HEK293 (cell line): ENCODE measurements at regions of chr22 and their contacts with region 1.

Region 1: DNA sequence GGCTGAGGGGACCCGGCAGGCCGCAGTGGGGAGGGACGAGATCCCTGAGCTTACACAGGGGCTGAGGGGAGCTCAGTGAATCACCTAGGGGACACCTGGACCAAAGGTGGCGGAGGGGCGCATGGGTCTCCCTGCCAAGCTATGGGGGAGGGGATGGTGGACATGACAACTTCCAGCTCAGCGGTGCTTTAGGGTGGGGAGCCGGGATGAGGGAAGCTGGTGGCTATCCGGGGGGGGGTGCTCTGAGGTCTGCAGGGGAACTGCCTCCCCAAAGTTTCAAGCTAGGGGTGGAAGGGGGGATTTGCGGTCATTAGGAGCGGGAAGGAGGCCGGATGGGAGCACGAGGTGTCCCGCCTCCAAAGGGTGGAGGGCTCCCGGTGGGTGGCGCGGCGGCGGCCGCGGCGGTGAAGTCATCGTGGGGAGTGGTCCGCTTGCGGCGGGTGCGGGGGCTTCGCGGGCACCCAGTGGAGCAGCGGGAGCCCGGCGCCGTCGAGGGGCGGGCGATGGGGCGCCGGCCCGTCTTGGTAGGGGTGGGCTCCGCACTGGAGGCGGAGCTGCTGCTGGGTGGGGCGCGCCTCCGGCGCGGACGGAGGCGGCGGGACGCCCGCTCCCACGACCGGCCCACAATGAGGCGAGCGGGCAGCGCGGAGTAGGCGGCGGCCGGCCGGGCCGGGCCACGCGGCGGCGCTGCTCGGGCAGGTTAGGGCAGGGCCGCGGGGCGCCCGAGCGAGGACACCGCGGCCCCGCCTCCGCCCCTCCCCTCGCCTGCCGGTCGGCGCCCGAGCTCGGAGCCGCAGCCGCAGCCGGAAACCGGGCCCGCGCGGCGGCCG is at the start of gene MICALL1:
- H3K4me3 ChIP-seq: peak within 1 kb of the TSS; percentile 72
- H3K27ac ChIP-seq: peak within 1 kb of the TSS; percentile 98
- H3K4me1 ChIP-seq: peaks cover 10% of the 10 kb centered on the region; the same call in 1 of the 2 replicates
- CTCF ChIP-seq: peak; percentile 28; the same call in 1 of the 2 replicates

Region 2: DNA sequence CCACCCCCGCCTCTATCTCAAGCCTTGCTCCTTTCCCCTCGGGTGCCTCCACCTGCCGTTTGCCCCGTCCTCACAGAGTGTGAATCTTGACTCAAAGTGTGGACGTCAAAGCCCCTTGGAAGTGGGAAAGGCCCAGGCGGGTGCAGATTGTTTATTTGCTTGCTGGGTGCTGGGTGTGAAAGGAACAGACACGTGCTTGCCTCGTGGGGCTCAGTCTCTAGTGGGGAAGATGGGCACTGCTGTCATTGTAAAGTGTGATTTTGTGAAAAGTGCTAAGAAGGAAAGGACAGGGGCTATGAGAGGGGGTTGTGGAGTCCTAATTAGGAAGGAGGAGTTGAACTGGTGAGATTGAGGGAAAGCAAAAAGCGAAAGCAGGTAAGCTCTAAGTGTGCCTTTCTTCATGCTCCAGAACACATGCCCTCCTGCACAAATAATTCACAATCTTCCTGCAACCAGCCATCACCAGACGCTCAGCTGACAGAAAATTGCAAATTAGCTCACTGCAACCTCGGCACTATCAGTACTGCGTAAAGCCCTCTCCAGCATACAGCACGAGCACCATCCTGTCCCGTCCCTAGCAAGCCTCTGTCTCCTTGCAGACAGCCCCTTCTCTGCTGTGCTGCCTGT is 107.8 kb before region 1 on chr22:
- CTCF ChIA-PET with region 1: no interaction called
- POLR2A ChIA-PET with region 1: no interaction called
- H3K4me3 ChIP-seq: no peak overlapping the region
- H3K27ac ChIP-seq: no peak overlapping the region
- H3K4me1 ChIP-seq: no peaks in the 10 kb centered on the region
- CTCF ChIP-seq: no peak

Region 3: DNA sequence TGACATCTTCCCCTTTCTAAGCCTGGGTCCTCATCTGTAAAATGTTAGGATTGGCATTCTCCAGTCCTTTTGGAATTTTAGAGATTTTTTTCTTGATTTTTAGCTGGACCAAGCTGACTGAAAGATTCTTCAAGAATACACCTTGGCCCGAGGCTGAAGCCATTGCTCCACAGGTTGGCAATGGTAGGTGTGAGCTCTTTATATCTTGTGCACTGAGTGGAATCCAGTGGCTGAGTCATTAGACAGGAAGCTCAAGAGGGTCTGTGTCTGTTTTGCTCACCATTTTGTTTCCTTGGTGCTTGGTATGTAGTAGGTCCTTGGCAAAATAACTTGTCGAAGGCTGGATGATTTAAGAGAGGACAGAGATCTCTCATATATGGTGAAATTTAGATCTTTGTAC is 50.3 kb before region 1 on chr22:
- CTCF ChIA-PET with region 1: no interaction called
- POLR2A ChIA-PET with region 1: no interaction called
- H3K4me3 ChIP-seq: no peak overlapping the region
- H3K27ac ChIP-seq: no peak overlapping the region; the same call in 1 of the 2 replicates
- H3K4me1 ChIP-seq: no peaks in the 10 kb centered on the region
- CTCF ChIP-seq: no peak

Region 4: GRCh38 chr22:37887610-37888378 is 18.0 kb before region 1 on chr22:
- CTCF ChIA-PET with region 1: interaction called, 12 read pairs
- POLR2A ChIA-PET with region 1: interaction called, 5 read pairs
- H3K4me3 ChIP-seq: no peak overlapping the region
- H3K27ac ChIP-seq: no peak overlapping the region
- H3K4me1 ChIP-seq: no peaks in the 10 kb centered on the region
- CTCF ChIP-seq: peak; percentile 53; the same call in 1 of the 2 replicates

Region 5: DNA sequence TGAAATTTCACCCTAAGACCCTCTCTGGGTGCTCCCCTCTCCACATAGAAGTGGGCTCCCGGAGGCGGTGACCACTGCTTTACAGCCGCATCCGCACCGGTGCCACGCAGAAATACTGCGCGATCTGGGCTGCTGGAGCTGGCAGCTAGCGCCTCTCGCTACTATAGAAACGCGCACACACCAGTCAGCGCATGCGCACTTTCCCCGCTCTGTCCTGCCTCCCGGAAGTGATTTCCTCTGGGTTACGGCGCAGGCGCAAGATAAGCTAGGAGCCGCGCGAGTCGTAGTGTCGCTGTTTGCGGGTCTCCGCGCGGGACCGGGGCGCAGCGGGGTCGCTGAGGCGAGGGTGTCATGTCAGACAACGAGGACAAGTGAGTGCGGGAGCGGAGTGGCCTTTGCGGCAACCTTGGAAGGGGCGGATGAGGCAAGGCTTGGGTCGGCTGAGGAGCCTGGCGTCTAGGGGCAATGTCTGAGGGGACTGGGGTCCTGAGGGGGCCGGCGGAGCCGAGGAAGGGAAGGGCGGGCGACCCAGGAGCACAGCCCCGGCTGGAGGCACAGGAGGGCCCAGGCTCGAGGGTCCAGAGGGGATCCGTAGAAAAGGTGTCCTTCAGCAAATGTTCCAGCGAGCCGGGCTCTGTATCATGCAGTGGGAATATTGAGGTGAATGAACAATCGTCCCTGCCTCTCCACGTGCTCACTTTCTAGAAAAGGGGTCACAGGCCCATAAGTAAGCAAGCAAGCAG is 47.9 kb after region 1 on chr22 and contains the starts of genes C22orf23 and POLR2F:
- CTCF ChIA-PET with region 1: no interaction called
- POLR2A ChIA-PET with region 1: interaction called, 10 read pairs
- H3K4me3 ChIP-seq: peak within 1 kb of the TSS; percentile 99
- H3K27ac ChIP-seq: peak within 1 kb of the TSS; percentile 47; the same call in 1 of the 2 replicates
- H3K4me1 ChIP-seq: 0 out of 2 replicates have a peak, but pooled peaks cover 4% of the 10 kb centered on the region
- CTCF ChIP-seq: peak; percentile 74